ENCODE measurements at regions of chr20 and their contacts with region 1.

Region 1: DNA sequence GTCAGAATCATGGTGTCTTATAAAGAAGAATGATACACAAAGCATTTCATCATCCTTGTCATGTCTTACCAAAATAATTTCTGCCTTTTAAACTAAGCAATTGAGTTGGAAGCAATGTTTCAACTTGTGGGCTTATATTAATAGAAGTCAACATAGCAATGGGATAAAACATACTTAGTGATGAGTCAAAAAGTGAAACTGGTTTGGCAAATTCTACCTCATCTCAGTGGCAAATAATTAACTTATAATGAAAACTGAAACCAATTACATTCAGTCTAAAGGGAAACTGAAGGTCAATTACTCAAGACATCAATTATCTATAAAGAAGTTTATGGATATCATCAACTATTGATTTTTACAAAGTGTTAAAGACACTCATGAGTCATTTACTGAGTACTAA is 463.8 kb downstream of the BMP2 start:
- DNase-seq: no peak

Region 2: DNA sequence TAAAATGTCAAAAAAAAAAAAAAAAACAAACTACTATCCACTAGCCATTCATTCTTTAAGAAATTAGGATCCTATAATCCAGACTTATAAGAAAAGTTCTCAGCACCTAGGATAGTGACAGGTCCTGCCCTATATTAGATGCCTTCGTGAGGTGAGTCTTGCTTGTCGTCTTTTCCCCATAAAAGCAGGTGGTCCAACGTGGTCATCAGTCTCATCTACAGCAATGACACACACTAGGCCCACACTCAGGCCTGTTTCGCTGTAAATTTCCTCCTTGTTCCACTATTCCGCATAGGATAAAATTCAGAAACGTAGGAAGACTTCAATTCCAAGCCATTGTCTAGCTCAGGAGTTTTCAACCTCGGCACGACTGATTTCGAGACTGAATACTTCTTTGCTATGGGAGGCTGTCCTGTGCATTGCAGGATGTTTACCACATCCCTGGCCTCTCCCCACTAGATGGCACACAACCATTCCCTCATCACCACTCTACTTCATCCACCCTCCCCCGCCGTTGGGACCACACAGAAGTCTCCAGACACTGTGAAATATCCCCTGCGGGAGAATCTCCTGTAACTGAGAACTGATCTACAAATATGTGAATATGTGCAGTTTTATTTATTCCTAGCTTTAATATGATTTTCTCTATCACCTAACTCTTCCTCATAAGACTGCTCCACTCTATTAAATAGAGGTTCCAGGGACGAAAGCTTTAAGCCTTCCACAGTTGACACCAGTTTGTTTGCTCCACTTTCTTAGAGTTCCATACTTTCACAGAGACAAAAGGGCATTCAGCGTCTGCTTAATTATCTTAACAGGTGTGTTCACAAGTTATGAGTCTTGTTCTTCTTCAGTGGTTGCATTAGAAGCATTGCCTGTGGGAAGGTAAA is 117.5 kb before region 1 on chr20:
- intact Hi-C with region 1: no loop called
- DNase-seq: no peak

Region 3: DNA sequence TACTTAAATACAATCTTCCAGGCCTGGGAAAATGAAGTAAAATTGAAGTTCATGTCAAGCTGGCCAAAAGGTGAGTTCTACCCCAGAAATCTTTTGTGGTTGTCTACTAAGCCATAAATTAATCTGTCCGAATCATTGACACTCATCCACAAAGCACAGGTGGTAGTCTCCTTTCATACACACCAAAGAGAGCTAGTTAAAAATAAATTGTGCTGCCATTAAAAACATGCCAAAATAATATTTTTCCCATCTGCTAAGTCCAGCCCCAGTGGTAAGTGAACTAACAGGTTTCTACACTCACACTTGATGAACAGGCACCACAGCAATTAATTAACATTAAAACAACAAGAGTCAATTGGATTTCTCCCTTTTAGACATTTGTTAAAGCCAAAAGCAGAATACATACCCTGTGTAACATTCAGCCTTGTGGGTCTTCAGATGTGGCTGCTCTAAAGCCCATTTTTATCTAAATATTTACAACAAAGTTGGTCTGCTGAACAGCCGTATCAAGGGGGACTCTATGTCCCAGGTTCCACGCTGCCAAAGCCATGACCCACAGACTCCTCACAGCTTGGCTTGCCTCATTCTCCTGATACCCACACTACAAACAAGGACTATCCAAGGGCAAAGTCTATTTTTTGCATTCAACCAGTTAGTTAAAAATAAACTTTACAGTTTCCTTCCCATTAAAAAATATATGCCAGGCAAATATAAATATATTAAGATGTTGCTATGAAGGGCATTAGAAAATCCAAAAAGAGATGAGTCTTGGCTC is 26.6 kb after region 1 on chr20:
- intact Hi-C with region 1: loop called in 1 of 2 experiments (anchors 2 kb)
- DNase-seq: no peak

Region 4: DNA sequence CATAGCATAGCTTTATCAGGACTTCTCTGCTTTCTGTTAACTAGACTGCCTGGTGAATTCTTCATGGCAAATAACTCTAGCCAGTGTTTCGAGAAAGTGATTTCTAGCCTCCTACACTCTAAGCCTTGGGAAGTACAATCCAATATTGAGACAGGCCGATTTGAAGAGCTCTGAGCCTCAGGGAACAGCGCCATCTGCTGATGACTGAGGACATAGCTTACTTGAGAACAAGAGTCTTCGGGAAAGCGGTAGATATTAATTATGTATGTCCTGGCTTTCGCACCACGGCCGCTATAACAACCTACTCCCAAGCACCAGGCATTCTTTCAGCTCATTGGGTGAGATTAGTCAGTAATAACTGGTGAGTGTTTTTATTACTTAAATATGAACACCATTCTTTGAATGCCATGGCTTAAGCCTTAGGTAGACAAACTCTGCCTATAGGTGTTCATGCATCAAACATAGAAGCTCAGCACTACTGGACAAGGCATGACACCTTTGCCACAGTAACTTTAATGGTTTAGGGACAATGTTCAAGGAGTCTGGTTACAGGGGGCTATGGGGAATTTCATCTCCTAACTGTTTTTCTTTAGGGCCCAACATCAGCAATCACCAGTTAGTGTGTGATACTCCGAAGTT is 54.7 kb after region 1 on chr20:
- intact Hi-C with region 1: no loop called
- DNase-seq: peak; percentile 86